ENCODE measurements at regions of chr2 and their contacts with region 1.

Region 1: GRCh38 chr2:61878756-61879155 is 9.7 kb downstream of the CCT4 start:
- DNase-seq: no peak
- ATAC-seq: no peak

Region 2: DNA sequence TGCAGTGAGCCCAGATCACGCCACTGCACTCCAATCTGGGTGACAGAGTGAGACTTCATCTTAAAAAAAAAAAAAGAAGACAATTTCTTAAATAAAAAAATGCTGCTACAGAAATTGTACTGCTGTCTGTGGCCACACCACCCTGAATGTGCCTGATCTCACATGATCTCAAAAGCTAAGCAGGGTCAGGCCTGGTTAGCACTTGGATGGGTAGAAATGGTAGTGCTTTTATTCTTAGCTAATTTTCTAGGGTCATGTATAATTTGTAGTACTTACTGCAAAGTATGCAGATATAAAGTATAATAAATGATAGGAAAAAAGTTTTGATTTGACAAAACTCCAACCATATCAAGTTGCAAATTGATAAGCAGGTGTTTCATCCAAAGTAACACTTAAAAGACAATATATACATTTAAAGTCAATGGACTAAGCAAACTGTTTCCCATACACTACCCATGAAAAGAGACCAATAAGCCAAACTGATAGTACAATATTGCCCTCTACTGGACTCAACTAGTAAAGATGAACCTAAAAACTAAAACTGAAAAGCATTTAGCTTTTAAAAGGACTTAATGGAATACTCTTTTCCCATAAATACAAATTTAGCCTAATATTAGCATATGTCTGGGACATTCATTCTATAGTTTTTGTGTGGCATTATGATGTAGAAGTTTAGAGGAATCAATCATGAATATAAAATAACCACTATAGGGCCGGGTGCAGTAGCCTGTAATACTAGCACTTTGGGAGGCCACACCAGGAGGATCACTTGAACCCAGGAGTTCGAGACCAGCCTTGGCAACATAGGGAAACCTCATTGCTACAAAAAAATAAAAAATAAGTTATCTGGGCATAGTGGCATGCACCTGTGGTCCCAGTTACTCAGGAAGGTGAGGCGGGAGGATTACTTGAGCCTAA is 879.9 kb before region 1 on chr2:
- intact Hi-C with region 1: no loop called
- DNase-seq: no peak
- ATAC-seq: no peak

Region 3: DNA sequence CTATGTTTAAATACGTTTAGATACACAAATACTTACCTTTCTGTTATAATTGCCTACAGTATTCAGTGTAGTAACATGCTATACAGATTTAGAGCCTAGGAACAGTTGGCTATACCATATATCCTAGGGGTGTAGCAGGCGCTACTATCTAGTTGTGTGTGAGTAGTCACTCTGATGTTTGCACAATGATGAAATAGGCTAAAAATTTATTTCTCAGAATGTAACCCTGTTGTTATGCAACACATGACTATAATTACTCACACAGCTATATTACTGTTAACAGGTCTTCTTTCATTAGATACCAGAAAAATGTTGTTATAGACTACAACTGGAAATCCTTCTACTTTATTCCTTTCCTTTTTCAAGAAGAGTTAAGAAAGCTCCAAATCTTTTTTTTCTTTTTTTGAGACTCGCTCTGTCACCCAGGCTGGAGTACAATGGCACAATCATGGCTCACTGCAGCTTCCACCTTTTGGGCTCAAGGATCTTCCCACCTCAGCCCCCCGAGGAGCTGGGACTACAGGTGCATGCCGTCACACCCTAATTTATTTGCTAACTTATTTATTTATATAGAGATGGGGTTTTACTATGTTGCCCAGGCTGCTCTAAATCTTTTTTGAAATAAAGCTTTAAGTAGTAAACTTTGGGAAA is 668.3 kb before region 1 on chr2:
- intact Hi-C with region 1: loop called (anchors 10 kb)
- DNase-seq: no peak
- ATAC-seq: no peak

Region 4: GRCh38 chr2:61493523-61493942 is 385.2 kb before region 1 on chr2:
- intact Hi-C with region 1: loop called (anchors 10 kb)
- DNase-seq: no peak
- ATAC-seq: no peak

Region 5: GRCh38 chr2:62966991-62967390 is 1088.2 kb after region 1 on chr2:
- intact Hi-C with region 1: no loop called
- DNase-seq: no peak
- ATAC-seq: no peak

Measured in Right ventricle myocardium superior (tissue), 1 donor.